ENCODE measurements at regions of chr1 and their contacts with region 1.

Region 1: GRCh38 chr1:179882243-179883039 is at the start of gene TOR1AIP1:
- DNase-seq: peak; percentile 92

Region 2: DNA sequence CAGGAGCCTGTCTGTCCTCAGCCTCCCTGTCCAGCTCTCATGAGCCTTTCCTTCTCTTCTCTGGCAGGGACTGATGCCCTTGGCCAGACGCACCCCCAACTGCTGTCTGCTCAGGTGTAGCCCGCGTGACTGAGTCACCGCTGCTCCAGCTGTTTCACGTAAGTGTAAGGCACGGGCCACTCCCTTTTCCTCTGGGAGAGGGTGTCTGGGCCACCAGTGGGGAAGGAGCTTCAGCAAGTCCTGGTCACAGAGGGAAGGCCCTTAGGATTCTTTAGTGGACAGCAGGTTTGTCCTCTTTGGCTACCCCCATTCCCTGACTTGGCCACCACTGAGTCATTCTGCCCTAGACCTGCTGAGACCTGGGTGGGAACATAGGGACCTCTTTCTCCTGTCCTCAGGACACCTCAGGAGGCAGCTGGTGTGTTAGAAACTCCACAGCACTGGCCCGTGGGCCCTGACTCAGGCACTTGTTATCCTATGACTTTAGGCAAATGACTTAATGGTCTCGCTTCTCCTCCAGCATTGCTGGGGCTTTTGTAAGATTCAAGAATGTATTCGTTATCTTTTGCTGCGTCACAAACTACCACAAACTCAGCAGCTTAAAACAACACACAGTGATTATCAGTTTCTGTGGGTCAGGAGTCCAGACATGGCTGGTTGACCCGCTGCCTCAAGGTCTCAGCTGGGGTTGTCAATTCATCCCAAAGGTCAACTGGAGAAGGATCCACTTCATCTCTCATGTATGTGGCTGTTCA is 74.5 kb before region 1 on chr1:
- CTCF ChIA-PET with region 1: no interaction called
- POLR2A ChIA-PET with region 1: no interaction called
- DNase-seq: no peak

Region 3: GRCh38 chr1:179926494-179927205 is 44.2 kb after region 1 on chr1:
- CTCF ChIA-PET with region 1: no interaction called
- POLR2A ChIA-PET with region 1: interaction called, 12 read pairs
- DNase-seq: no peak

Region 4: GRCh38 chr1:179933219-179933618 is 50.8 kb after region 1 on chr1:
- CTCF ChIA-PET with region 1: interaction called, 3 read pairs
- POLR2A ChIA-PET with region 1: interaction called, 12 read pairs
- DNase-seq: no peak

Region 5: DNA sequence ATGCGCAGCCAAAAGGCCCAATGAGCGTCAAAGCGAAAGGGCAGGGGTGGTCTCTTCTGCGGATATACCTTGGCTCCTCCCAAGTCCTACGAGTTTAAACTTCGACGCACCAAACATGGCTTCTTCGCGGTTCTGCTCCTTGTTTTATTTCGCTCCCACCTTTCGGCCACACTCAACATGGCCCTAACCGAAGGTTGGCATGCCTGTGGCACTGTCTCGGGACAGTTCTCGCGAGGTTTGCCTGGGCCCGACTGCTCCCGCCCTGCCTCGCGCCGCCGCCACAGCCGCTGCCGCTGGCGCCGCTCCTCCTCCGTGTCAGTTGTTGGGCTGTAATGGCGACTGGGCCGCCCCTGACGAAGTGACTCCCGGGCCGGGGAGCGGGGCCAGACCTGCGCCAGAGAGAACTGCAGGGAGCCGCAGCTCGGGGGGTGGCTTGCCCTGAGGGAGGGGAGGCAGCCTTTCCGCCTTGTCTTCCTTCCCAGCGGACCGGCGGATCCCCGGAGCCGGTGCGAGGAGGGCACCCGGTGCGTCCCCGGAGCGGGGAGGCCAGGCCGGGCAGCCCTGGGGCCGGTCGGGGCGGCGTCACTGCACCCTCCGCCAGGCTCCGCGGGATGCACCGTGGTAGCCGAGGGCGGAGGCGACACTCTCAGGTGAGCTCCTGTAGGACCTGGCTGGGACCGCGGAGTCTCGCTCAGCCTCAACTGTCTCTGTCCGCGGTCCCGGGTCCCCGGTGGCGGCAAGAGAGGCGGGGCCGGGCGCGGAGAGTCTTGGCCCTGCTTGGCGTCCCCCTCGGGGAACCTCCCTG is 72.3 kb after region 1 on chr1 and contains the start of gene CEP350:
- CTCF ChIA-PET with region 1: no interaction called
- POLR2A ChIA-PET with region 1: interaction called, 10 read pairs
- DNase-seq: peak; percentile 97

Region 6: GRCh38 chr1:180154325-180155181 is 272.1 kb after region 1 on chr1 and contains the start of gene QSOX1:
- CTCF ChIA-PET with region 1: no interaction called
- POLR2A ChIA-PET with region 1: interaction called, 16 read pairs
- DNase-seq: peak; percentile 99